ENCODE measurements at regions of chr9 and their contacts with region 1.

Region 1: DNA sequence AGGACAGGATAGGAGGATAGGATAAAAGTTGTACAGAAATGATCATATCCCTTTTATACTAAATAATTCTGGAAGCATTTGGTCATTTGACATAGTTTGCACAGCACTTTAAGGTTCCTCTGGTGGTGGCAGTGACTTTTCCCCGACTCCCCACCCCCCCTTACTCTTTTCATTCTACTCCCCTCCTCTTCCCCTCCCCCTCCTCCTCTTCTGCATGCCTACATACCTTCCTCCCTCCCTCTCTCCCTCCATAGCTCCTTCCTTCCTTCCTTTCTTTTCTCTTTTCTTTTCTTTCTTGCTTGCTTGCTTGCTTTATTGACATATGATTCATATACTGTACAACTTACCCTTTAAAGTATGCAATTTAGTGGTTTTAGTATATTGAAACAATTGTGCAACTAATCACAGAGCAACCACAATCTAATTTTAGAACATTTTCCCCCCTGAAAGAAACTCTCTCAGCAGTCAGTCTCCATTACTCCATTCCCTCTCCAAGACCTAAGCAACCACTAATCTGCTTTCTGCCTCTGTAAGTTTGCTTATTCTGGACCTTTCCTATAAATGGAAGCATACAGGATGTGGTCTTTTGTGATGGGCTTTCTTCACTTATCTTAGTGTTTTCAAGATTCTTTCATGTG is 159.0 kb downstream of the HACD4 start:
- H3K4me3 Mint-ChIP-seq: no peak overlapping the region
- H3K27ac Mint-ChIP-seq: no peak overlapping the region
- H3K4me1 Mint-ChIP-seq: peaks cover 8% of the 10 kb centered on the region
- H3K27me3 Mint-ChIP-seq: no peaks in the 10 kb centered on the region

Region 2: DNA sequence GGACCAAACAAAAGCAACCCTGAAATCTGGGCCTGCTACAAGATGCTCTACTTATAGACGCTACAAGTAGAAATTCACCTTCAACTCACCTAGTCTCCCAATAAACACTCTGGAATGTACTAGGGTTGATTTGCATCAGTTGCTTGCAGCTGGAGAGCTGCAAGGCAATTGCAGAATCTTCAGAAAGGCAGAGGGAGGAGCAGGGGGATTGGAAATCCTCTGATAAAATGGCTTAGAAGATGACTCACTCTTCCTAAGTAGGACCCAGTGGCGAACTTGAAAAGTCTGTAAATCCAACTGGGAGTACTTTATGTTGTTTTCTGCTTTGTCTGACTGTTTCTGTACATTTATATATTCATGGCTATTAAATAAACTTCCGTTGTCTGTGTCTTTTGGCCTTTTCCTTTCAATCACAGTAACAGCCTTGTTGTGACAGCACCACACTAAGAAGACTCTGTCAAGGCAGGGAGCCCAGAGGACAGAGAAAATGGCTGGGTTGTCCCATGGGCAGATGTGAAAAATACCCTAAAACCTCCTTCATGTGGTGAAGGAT is 235.5 kb before region 1 on chr9:
- intact Hi-C with region 1: loop called (anchors 10 kb)
- H3K4me3 Mint-ChIP-seq: no peak overlapping the region
- H3K27ac Mint-ChIP-seq: no peak overlapping the region
- H3K4me1 Mint-ChIP-seq: no peaks in the 10 kb centered on the region
- H3K27me3 Mint-ChIP-seq: peaks cover under 1% of the 10 kb centered on the region

Region 3: GRCh38 chr9:20811872-20812271 is 60.6 kb before region 1 on chr9:
- intact Hi-C with region 1: no loop called
- H3K4me3 Mint-ChIP-seq: no peak overlapping the region
- H3K27ac Mint-ChIP-seq: no peak overlapping the region
- H3K4me1 Mint-ChIP-seq: peaks cover 12% of the 10 kb centered on the region
- H3K27me3 Mint-ChIP-seq: no peaks in the 10 kb centered on the region

Measured in dendritic cell treated with granulocyte-macrophage colony-stimulating factor and Interleukin-4, amounts not matched to agents 40 ng/mL and 50 ng/mL, for 4 days (primary cell).